CD4-positive, alpha-beta memory T cell (primary cell): ENCODE measurements at regions of chr5 and their contacts with region 1.

Region 1: DNA sequence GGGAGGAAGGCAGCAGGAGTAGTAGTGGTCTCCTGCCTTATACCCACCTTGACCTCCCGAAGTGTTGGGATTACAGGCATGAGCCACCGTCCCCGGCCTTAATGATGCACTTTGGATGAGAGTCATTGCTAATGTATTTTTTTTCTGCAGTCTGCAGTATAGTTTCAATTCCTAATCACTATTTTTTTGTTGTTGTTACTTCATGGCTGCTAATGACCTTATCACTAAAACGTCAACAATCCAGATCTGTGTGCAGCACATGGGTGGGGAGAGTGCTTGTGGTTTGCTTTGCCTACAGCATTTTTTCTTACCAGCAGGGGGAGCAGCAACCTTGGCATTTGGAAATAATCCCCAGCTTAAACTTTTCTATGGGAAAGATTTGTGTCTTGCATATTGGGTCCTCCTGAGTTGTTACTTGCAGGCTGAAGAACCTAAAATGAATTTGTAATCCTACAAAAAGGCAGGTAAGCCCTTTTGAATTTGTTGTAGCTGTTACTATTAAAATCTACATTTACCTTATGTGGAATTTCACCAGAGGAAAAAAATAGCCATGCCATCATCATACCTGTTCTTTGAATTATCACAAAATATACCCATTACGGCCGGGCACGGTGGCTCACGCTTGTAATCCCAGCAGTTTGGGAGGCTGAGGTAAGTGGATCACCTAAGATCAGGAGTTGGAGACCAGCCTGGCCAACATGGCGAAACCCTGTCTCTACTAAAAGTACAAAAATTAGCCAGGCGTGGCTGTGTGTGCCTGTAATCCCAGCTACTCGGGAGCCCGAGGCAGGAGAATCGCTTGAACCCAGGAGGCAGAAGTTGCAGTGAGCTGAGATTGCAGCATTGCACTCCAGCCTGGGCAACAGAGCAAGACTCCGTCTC is 6.3 kb upstream of the MED7 start:
- DNase-seq: peak; percentile 84 to 88 (median 85)
- H3K4me3 ChIP-seq: no peak overlapping the region
- H3K4me3 Mint-ChIP-seq: peak overlapping the region in 6 of 8 donors; percentile 23 to 66 (median 42)
- H3K27ac ChIP-seq: no peak overlapping the region
- H3K27ac Mint-ChIP-seq: peak overlapping the region; percentile 31 to 94 (median 85)
- H3K4me1 ChIP-seq: peaks cover 36% of the 10 kb centered on the region
- H3K4me1 Mint-ChIP-seq: peaks cover 28 to 42% (median 35%) of the 10 kb centered on the region in 4 donors
- H3K27me3 ChIP-seq: no peaks in the 10 kb centered on the region
- H3K27me3 Mint-ChIP-seq: no peaks in the 10 kb centered on the region

Region 2: DNA sequence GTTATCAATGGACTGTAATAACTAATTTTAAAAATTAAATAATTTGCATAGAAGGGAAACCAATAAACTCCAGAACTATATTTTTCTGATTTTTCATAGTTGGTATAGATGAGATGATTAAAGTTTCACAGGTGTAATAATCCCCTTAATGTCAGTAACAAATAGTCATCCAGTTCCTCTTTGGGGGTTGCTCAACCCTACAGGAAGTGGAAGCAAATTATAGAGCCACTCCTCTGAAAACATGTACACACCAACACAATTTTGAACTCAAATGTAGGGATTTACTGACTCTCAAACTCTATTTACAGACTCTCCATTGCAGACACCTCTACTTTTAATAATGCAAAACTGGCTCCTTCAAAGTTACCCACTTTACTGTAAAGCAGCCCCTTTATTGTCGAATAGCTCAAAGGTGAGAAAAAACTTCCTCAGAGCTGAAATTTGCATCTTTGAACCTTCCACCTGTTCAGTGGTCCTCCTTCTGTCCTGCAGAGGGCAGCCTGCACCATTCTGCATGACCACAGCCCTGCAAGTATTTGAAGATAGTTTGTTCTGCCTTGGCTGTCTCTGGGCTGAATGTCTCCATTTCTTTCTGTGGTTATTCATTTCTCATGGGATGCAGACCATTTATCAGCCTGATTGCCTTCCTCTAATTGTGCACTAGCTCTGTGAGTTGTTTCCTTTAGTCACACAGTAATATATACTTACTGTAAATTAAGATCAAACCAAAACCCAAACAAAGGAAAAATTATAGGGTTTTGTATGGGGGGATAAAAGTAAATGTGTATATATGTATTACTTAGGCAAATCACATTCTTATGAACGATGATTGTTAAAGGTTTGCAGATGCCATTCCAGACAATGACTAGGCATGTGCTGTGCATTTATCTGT is 1205.2 kb before region 1 on chr5:
- CTCF ChIA-PET with region 1: no interaction called
- POLR2A ChIA-PET with region 1: no interaction called
- intact Hi-C with region 1: no loop called
- DNase-seq: peak; percentile 4 to 43 (median 10)
- H3K4me3 ChIP-seq: no peak overlapping the region
- H3K4me3 Mint-ChIP-seq: no peak overlapping the region
- H3K27ac ChIP-seq: no peak overlapping the region
- H3K27ac Mint-ChIP-seq: peak overlapping the region in 1 of 7 donors; percentile 12
- H3K4me1 ChIP-seq: no peaks in the 10 kb centered on the region
- H3K4me1 Mint-ChIP-seq: peaks cover 0 to 3% (median 0%) of the 10 kb centered on the region in 4 donors
- H3K27me3 ChIP-seq: no peaks in the 10 kb centered on the region
- H3K27me3 Mint-ChIP-seq: peaks cover 0 to 2% of the 10 kb centered on the region in 2 donors

Region 3: GRCh38 chr5:157116483-157116954 is 32.5 kb before region 1 on chr5:
- CTCF ChIA-PET with region 1: no interaction called
- POLR2A ChIA-PET with region 1: no interaction called
- intact Hi-C with region 1: no loop called
- DNase-seq: no peak
- H3K4me3 ChIP-seq: no peak overlapping the region
- H3K4me3 Mint-ChIP-seq: peak overlapping the region in 1 of 8 donors; percentile 40
- H3K27ac ChIP-seq: no peak overlapping the region
- H3K27ac Mint-ChIP-seq: peak overlapping the region in 4 of 7 donors; percentile 29 to 70 (median 64)
- H3K4me1 ChIP-seq: no peaks in the 10 kb centered on the region
- H3K4me1 Mint-ChIP-seq: peaks cover 6 to 10% (median 7%) of the 10 kb centered on the region in 4 donors
- H3K27me3 ChIP-seq: no peaks in the 10 kb centered on the region
- H3K27me3 Mint-ChIP-seq: no peaks in the 10 kb centered on the region

Region 4: DNA sequence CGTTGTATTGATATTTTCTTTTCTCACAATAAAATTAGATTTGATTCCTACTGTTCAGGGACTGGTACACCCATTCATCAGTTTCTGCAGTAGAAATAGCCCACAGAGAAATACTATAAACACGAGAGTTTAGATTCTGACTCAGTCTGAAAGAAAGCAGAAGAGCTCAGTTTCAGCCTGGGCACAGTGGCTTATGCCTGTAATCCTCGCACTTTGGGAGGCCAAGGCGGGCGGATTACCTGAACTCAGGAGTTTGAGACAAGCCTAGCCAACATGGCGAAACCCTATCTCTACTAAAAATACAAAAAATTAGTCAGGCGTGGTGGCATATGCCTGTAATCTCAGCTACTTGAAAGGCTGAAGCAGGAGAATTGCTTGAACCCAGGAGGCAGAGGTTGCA is 40.2 kb after region 1 on chr5:
- CTCF ChIA-PET with region 1: interaction called, 66 read pairs
- POLR2A ChIA-PET with region 1: interaction called, 73 read pairs
- intact Hi-C with region 1: no loop called
- DNase-seq: no peak
- H3K4me3 ChIP-seq: peak overlapping the region; percentile 44 to 59
- H3K4me3 Mint-ChIP-seq: peak overlapping the region; percentile 84 to 100 (median 96)
- H3K27ac ChIP-seq: peak overlapping the region; percentile 64
- H3K27ac Mint-ChIP-seq: peak overlapping the region; percentile 84 to 97 (median 93)
- H3K4me1 ChIP-seq: peaks cover 97% of the 10 kb centered on the region
- H3K4me1 Mint-ChIP-seq: peaks cover 66 to 91% (median 78%) of the 10 kb centered on the region in 4 donors
- H3K27me3 ChIP-seq: no peaks in the 10 kb centered on the region
- H3K27me3 Mint-ChIP-seq: no peaks in the 10 kb centered on the region

Region 5: DNA sequence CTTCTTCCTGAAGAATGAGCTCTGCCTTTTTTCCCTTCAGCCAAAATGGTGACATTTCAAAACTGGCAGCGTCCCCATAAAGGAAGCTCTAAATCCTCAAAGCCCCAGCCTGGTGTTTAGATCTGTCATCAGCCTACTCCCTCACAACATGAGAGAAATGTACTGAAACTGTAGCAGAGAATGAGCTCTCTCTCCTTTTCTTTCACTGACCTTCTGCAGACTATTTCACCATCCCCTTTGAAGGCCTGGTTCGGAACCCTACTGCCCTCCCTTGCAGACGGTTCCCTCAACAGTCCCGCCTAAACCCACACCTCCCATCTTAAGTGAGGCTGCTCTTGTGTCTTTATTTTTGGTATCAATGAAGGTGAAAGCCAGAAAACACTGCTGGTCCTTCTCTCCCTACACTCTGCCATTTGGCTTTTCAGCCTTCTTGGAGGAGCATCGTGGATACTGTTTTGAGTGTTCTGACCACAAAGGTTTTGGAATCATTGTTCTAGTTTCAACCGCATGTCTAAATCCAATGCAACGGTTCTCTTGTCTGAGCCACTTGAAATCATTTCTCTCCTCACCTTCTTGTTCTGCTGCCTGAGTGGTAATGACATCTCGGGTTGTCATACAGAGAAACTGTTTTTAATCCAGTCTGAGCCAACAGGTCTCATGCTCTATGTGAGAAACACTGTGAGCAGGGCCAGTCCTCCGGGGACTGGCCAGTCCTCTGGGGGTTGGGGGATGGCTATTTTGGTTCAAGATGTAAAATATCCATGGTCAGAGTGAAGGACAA is 70.7 kb after region 1 on chr5:
- CTCF ChIA-PET with region 1: interaction called, 35 read pairs
- POLR2A ChIA-PET with region 1: interaction called, 24 read pairs
- intact Hi-C with region 1: loop called (anchors 1 kb)
- DNase-seq: no peak
- H3K4me3 ChIP-seq: no peak overlapping the region
- H3K4me3 Mint-ChIP-seq: peak overlapping the region in 7 of 8 donors; percentile 57 to 76 (median 67)
- H3K27ac ChIP-seq: peak overlapping the region; percentile 44
- H3K27ac Mint-ChIP-seq: peak overlapping the region; percentile 87 to 96 (median 93)
- H3K4me1 ChIP-seq: peaks cover 98% of the 10 kb centered on the region
- H3K4me1 Mint-ChIP-seq: peaks cover 71 to 85% (median 81%) of the 10 kb centered on the region in 4 donors
- H3K27me3 ChIP-seq: no peaks in the 10 kb centered on the region
- H3K27me3 Mint-ChIP-seq: no peaks in the 10 kb centered on the region

Region 6: DNA sequence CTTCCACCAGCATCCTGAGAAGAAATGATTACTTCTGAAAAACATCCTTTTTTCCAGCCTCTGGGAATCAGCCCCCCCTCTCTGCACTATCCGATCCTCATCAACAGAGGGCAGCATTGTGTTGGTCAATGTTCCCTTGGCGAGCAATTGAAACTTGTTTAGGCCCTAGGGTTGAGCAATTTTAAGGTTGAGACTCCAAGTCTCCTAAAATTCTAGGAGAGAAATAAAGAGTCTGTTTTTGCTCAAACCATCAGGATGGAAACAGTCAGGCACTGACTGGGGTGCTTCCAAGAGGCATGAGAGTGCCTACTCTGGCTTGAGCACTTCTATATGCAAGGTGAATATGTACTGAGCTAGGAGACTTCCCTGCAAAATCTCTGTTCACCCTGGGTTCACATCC is 104.6 kb after region 1 on chr5:
- CTCF ChIA-PET with region 1: interaction called, 99 read pairs
- POLR2A ChIA-PET with region 1: interaction called, 26 read pairs
- intact Hi-C with region 1: loop called (anchors 1 kb)
- DNase-seq: no peak
- H3K4me3 ChIP-seq: no peak overlapping the region
- H3K4me3 Mint-ChIP-seq: peak overlapping the region in 7 of 8 donors; percentile 61 to 86 (median 79)
- H3K27ac ChIP-seq: peak overlapping the region; percentile 64
- H3K27ac Mint-ChIP-seq: peak overlapping the region; percentile 84 to 98 (median 94)
- H3K4me1 ChIP-seq: peaks cover 97% of the 10 kb centered on the region
- H3K4me1 Mint-ChIP-seq: peaks cover 78 to 96% (median 88%) of the 10 kb centered on the region in 4 donors
- H3K27me3 ChIP-seq: no peaks in the 10 kb centered on the region
- H3K27me3 Mint-ChIP-seq: no peaks in the 10 kb centered on the region

Region 7: GRCh38 chr5:157312492-157312891 is 163.5 kb after region 1 on chr5:
- CTCF ChIA-PET with region 1: interaction called, 30 read pairs
- POLR2A ChIA-PET with region 1: interaction called, 22 read pairs
- intact Hi-C with region 1: loop called (anchors 1 kb)
- DNase-seq: peak; percentile 55 to 71 (median 61)
- H3K4me3 ChIP-seq: no peak overlapping the region
- H3K4me3 Mint-ChIP-seq: peak overlapping the region in 1 of 8 donors; percentile 2
- H3K27ac ChIP-seq: no peak overlapping the region
- H3K27ac Mint-ChIP-seq: peak overlapping the region; percentile 24 to 94 (median 77)
- H3K4me1 ChIP-seq: peaks cover 33% of the 10 kb centered on the region
- H3K4me1 Mint-ChIP-seq: peaks cover 23 to 42% (median 34%) of the 10 kb centered on the region in 4 donors
- H3K27me3 ChIP-seq: no peaks in the 10 kb centered on the region
- H3K27me3 Mint-ChIP-seq: no peaks in the 10 kb centered on the region

Region 8: GRCh38 chr5:157449011-157449723 is 300.2 kb after region 1 on chr5:
- CTCF ChIA-PET with region 1: no interaction called
- POLR2A ChIA-PET with region 1: no interaction called
- intact Hi-C with region 1: no loop called
- DNase-seq: no peak
- H3K4me3 ChIP-seq: no peak overlapping the region
- H3K4me3 Mint-ChIP-seq: no peak overlapping the region
- H3K27ac ChIP-seq: no peak overlapping the region
- H3K27ac Mint-ChIP-seq: no peak overlapping the region
- H3K4me1 ChIP-seq: no peaks in the 10 kb centered on the region
- H3K4me1 Mint-ChIP-seq: no peaks in the 10 kb centered on the region
- H3K27me3 ChIP-seq: no peaks in the 10 kb centered on the region
- H3K27me3 Mint-ChIP-seq: no peaks in the 10 kb centered on the region

Region 9: DNA sequence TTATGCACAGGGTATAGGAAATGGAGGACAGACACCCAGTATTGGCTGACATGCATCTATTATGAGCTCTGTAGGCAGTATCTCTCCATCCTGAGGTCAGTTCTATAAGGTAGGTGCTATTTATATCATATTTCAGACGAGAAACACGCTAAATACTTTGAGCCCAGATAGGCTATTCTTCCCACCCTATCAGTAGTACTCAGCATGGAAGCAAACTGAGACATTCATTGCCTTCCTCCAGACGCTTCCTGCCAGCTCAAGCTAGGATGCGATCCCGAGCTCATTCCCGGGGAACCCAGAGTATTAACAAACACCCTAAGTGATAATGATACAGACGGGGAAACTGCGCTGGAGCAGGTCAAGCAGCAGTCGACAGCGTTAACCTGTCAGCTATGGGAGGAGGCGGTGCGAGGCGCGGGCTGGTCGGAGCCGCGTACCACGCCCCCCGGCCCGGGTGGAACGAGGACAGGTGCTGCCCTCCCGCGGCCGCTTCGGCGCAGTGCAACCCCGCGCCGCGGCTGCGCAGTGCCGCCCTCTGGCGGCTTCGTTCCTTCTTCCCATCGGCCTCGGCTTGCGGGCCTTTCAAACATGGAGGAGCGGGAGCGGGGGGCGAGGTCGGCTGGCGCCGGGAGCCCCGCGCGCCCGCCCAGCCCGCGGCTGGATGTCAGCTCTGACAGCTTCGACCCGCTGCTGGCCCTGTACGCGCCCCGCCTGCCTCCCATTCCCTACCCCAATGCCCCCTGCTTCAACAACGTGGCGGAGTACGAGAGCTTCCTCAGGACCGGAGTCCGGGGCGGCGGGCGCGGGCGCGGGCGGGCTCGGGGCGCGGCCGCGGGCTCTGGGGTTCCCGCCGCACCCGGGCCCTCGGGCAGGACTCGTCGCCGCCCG is 594.4 kb after region 1 on chr5 and contains the start of gene LSM11:
- CTCF ChIA-PET with region 1: no interaction called
- POLR2A ChIA-PET with region 1: no interaction called
- intact Hi-C with region 1: loop called (anchors 2 kb)
- DNase-seq: peak; percentile 85 to 94 (median 88)
- H3K4me3 ChIP-seq: peak within 1 kb of the TSS; percentile 50 to 63
- H3K4me3 Mint-ChIP-seq: peak within 1 kb of the TSS; percentile 93 to 98 (median 96)
- H3K27ac ChIP-seq: peak within 1 kb of the TSS; percentile 45
- H3K27ac Mint-ChIP-seq: peak within 1 kb of the TSS; percentile 62 to 96 (median 94)
- H3K4me1 ChIP-seq: peaks cover 18% of the 10 kb centered on the region
- H3K4me1 Mint-ChIP-seq: peaks cover 19 to 34% (median 28%) of the 10 kb centered on the region in 4 donors
- H3K27me3 ChIP-seq: no peaks in the 10 kb centered on the region
- H3K27me3 Mint-ChIP-seq: no peaks in the 10 kb centered on the region
- total RNA-seq, gene LSM11: 4.4 to 4.8 TPM